Ovary (tissue), 10 donors: ENCODE measurements at regions of chr5 and their contacts with region 1.

Region 1: GRCh38 chr5:143946837-143947236 is 134.9 kb downstream of the HMHB1 start:
- DNase-seq: no peak
- H3K4me3 ChIP-seq: no peak overlapping the region
- H3K27ac ChIP-seq: no peak overlapping the region
- H3K4me1 ChIP-seq: no peaks in the 10 kb centered on the region
- H3K27me3 ChIP-seq: no peaks in the 10 kb centered on the region
- CTCF ChIP-seq: no peak
- EP300 ChIP-seq: no peak
- POLR2A ChIP-seq: no peak

Region 2: DNA sequence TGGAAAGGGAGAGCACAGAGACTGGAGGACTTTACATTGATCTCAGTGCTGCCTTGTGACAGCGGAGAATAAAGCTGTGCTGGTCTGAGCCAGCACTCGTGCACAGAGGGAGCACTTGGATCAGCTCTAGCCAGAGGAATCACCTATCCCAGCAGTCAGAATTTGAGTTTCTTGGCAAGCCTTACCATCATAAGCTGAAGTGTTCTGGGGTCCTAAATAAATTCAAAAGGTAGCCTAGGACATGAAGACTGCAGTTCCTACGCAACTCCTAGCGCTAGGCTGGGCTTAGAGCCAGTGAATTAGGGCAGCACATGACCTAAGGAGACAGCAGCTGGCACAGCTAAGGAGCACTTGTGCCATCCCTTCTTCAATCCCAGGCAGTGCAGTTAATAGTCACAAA is 15.4 kb before region 1 on chr5:
- intact Hi-C with region 1: no loop called
- DNase-seq: no peak
- H3K4me3 ChIP-seq: no peak overlapping the region
- H3K27ac ChIP-seq: no peak overlapping the region
- H3K4me1 ChIP-seq: no peaks in the 10 kb centered on the region
- H3K27me3 ChIP-seq: no peaks in the 10 kb centered on the region
- CTCF ChIP-seq: no peak
- EP300 ChIP-seq: no peak
- POLR2A ChIP-seq: no peak

Region 3: DNA sequence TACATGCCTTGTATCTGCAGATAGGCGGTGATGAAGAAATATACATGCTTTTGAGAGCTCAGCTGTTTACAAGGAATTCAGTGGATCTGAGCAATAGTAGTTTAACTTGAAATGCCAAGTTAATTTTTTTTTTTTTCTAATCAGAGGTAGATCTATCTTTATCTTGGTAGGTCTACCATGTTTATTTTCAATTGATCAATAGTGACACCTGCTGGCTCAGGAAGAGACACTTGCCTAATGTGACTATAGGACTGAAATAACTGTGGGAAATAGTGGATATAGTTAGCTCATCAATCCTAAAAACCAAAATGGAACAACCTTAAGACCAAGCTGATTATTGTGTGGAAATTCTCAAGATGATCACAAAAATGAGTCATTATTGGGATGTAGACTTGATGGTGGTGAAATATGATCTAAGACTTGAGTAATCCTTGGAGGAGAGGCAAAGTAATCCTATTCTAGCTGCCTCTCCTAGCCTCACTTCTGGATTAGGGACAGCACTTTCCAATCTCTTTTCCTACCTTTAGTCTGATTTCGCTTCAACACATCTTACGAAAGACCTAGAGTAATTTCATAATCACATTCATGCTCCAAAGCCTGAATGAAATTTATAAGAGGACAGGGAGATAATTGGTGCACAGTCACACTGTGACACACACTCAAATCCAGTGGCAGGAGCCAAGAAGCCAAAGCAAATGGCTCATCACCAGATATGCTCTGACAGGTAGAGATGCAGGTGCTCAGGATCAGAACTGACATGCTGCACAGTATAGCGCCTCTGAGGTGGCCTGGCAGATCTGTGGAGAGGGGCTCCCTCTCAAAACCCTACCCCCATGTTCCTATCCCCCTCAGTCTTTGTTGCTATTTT is 21.4 kb after region 1 on chr5:
- intact Hi-C with region 1: loop called in 1 of 4 experiments (anchors 1 kb)
- DNase-seq: no peak
- H3K4me3 ChIP-seq: no peak overlapping the region
- H3K27ac ChIP-seq: no peak overlapping the region
- H3K4me1 ChIP-seq: no peaks in the 10 kb centered on the region
- H3K27me3 ChIP-seq: no peaks in the 10 kb centered on the region
- CTCF ChIP-seq: no peak
- EP300 ChIP-seq: no peak
- POLR2A ChIP-seq: no peak